ENCODE measurements at regions of chr13 and their contacts with region 1.

Region 1: GRCh38 chr13:77599351-77599750 is 63.8 kb downstream of the SCEL start:
- DNase-seq: no peak
- H3K4me3 ChIP-seq: no peak overlapping the region
- H3K27ac ChIP-seq: no peak overlapping the region
- H3K4me1 ChIP-seq: no peaks in the 10 kb centered on the region
- H3K27me3 ChIP-seq: no peaks in the 10 kb centered on the region
- CTCF ChIP-seq: no peak
- EP300 ChIP-seq: no peak
- POLR2A ChIP-seq: no peak

Region 2: GRCh38 chr13:77751513-77752456 is 152.4 kb after region 1 on chr13:
- in situ Hi-C with region 1: loop called in 2 of 4 experiments (anchors 10 kb)
- intact Hi-C with region 1: no loop called
- DNase-seq: no peak
- H3K4me3 ChIP-seq: no peak overlapping the region
- H3K27ac ChIP-seq: no peak overlapping the region
- H3K4me1 ChIP-seq: no peaks in the 10 kb centered on the region
- H3K27me3 ChIP-seq: no peaks in the 10 kb centered on the region
- CTCF ChIP-seq: peak; percentile 50 to 68 (median 55)
- EP300 ChIP-seq: no peak
- POLR2A ChIP-seq: no peak